Activated T-helper 2 cell treated with anti-CD3 and anti-CD28 coated beads, Interferon-gamma antibody, Interleukin-2, Interleukin-4, amounts not matched to agents 10 μg/mL and 5 μg/mL and 100 μg/mL, durations not matched to agents 14 hours and 24 hours and 36 hours (primary cell): ENCODE measurements at regions of chr7 and their contacts with region 1.

Region 1: GRCh38 chr7:116525913-116526861 is 1.4 kb downstream of the CAV1 start:
- DNase-seq: peak; percentile 51
- H3K4me3 Mint-ChIP-seq: peak overlapping the region; percentile 79
- H3K27ac Mint-ChIP-seq: no peak overlapping the region
- H3K4me1 Mint-ChIP-seq: peaks cover 23% of the 10 kb centered on the region
- H3K27me3 Mint-ChIP-seq: peaks cover 71% of the 10 kb centered on the region

Region 2: DNA sequence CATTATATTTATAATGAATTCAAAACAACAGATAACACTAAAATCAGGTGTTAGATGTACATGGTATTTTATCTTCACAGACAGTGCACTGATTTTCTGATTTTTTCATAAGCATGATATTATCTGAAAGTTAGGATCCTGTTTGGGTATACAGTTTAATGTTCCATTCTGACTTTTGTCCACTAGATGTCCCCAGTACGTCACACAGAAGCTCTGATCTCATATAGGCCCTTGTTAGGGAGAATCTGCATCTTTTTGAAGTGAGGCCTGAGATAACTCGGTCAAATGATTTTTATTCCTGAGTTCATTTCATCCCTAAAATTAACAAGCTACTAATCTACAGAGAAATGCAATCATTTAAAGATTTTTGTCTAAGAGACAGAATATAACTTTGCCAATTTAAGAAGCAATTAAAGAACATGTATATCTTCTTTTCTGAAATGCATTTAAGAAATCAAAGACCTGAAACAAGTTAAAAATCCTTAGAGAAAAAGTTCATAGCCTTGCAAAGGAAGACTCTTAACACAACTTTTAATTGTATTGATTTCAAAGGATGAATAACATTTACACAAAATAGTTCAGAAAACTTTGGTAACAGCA is 387.9 kb before region 1 on chr7:
- intact Hi-C with region 1: loop called (anchors 1 kb)
- DNase-seq: no peak
- H3K4me3 Mint-ChIP-seq: no peak overlapping the region
- H3K27ac Mint-ChIP-seq: no peak overlapping the region
- H3K4me1 Mint-ChIP-seq: peaks cover 13% of the 10 kb centered on the region
- H3K27me3 Mint-ChIP-seq: peaks cover 26% of the 10 kb centered on the region

Region 3: GRCh38 chr7:116173051-116174028 is 352.8 kb before region 1 on chr7:
- intact Hi-C with region 1: loop called (anchors 10 kb)
- DNase-seq: no peak
- H3K4me3 Mint-ChIP-seq: no peak overlapping the region
- H3K27ac Mint-ChIP-seq: no peak overlapping the region
- H3K4me1 Mint-ChIP-seq: peaks cover 3% of the 10 kb centered on the region
- H3K27me3 Mint-ChIP-seq: peaks cover 34% of the 10 kb centered on the region

Region 4: GRCh38 chr7:116258734-116259133 is 267.5 kb before region 1 on chr7:
- intact Hi-C with region 1: loop called (anchors 1 kb)
- DNase-seq: no peak
- H3K4me3 Mint-ChIP-seq: no peak overlapping the region
- H3K27ac Mint-ChIP-seq: no peak overlapping the region
- H3K4me1 Mint-ChIP-seq: peaks cover 9% of the 10 kb centered on the region
- H3K27me3 Mint-ChIP-seq: peaks cover 5% of the 10 kb centered on the region

Region 5: GRCh38 chr7:116499168-116500077 is 26.8 kb before region 1 on chr7 and contains the start of gene CAV2:
- intact Hi-C with region 1: loop called (anchors 2 kb)
- DNase-seq: no peak
- H3K4me3 Mint-ChIP-seq: peak within 1 kb of the TSS; percentile 51
- H3K27ac Mint-ChIP-seq: no peak within 1 kb of the TSS
- H3K4me1 Mint-ChIP-seq: peaks cover 10% of the 10 kb centered on the region
- H3K27me3 Mint-ChIP-seq: peaks cover 61% of the 10 kb centered on the region
- total RNA-seq, gene CAV2: not detected in 2 replicates